Ovary (tissue), 10 donors: ENCODE measurements at regions of chr11 and their contacts with region 1.

Region 1: DNA sequence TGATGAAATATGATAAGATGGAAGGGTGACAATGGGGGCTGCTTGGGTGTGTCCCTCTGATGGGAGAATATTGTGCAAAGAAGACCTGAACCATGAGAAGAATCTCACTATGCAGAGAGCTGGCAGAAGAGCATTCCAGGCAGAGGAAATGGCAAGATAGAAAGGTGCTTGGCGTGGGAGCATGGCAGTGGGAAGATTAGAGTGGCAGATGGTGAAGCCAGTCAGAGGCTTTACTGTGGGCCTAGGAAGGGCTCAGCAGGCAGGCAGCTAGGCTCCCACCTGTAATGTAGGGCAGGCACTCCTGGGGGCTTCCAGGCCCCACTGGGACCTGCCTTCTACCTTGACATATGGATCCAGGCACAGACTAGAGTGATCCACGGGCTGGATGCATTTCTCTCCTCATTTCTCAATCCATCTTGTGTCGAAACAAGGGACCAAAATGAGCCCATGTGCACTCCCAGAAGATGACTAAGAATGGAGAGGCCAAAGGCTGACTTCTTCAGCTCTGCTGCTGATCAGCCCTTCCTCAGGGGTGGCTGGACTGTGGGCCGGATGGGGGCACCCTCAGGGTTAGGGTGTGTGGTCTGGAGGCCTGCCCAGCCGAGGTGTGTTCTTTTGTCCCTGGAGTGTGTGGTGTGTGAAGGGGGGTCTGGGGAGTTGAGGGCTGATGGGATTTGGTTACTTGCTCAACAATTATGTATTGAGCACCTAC is 88.3 kb downstream of the TSPAN18 start:
- DNase-seq: no peak
- H3K4me3 ChIP-seq: no peak overlapping the region
- H3K27ac ChIP-seq: no peak overlapping the region
- H3K4me1 ChIP-seq: no peaks in the 10 kb centered on the region
- H3K27me3 ChIP-seq: no peaks in the 10 kb centered on the region
- CTCF ChIP-seq: no peak
- EP300 ChIP-seq: no peak
- POLR2A ChIP-seq: no peak

Region 2: DNA sequence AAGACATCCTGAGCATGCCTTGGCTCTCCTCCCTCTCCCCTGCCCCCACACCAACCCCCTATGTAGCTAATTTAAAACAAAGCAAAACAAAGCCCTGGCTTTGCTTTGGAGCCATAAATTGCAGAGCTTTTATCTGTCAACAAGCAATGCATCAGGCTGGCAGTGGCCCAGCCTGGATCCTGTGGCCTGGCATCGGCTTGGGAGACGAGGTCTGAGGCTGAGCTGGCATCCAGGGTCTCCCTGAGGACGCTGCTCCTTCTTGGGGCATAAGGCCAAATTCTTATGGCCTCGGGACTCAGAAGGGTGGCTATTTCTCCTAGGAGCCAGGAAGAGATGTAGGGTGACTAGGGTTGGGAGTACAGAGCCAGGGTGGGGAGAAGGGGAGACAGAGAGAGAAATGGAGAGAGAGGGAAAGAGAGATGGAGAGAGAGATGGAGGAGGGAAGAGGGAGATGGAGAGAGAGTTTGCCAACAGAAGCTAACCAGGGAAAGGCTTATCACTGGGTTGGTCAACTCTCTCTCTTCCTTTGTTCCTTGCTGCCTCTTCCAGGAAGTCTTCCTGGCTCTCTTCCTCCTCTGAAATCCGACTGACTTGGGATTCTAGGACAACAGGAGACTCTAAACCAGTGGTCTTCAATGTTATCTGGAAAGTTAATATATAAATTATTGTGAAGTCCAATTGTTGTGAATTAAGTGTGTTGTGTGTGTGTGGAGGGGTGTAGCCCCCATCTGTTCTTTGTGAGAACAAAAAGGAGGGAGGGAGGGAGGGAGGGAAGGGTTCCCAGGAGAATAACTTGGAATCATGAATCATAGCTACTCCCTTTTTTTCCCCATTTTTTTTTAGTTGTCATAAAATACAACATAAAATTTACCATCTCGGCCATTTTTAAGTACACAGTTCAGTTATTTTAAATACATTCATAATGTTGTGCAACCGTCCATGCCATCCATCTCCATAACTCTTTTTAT is 59.2 kb before region 1 on chr11:
- intact Hi-C with region 1: loop called in 1 of 4 experiments (anchors 10 kb)
- DNase-seq: no peak
- H3K4me3 ChIP-seq: no peak overlapping the region
- H3K27ac ChIP-seq: no peak overlapping the region
- H3K4me1 ChIP-seq: peaks cover 5% of the 10 kb centered on the region
- H3K27me3 ChIP-seq: no peaks in the 10 kb centered on the region
- CTCF ChIP-seq: no peak
- EP300 ChIP-seq: no peak
- POLR2A ChIP-seq: no peak

Region 3: DNA sequence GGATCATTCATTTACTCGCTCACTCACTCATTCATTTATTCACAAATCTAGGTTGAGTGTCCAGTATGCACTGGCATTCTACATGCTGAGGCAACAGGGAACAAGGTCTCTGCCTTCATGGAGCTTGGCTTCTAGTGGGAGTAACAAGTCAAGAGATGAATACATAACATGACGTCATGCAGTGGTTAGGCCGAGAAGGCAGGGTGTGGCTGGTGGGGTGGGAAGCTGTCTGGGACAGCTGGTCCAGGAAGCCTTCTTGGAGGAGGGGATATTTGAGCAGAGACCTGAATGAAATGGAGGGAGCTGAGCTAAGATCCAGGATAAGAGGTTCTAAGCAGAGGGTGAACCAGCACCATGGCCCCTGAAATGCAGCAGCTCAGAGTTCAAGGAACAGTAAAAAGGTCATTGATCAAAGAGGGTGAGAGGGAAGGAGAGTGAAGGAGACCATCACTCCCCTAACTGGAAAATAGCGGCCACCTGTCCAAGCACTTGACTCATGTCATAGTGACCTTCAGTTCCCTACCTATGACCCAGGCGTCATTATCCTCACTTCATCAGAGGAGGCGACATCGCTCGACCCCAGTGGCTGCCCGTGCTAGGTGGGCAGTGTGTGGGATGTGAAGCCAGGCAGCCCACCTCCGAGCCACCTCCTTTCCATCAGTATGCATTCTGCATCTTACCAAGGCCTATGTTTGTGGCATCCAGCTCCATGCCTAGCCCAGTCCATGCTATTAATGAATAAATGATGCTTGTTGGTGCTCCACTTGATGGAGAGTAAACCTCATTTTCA is 16.8 kb after region 1 on chr11:
- intact Hi-C with region 1: no loop called
- DNase-seq: no peak
- H3K4me3 ChIP-seq: no peak overlapping the region
- H3K27ac ChIP-seq: no peak overlapping the region
- H3K4me1 ChIP-seq: no peaks in the 10 kb centered on the region
- H3K27me3 ChIP-seq: no peaks in the 10 kb centered on the region
- CTCF ChIP-seq: no peak
- EP300 ChIP-seq: no peak
- POLR2A ChIP-seq: no peak